K562 (cell line): ENCODE measurements at regions of chr2 and their contacts with region 1.

Region 1: GRCh38 chr2:230987137-230988020 is 8.5 kb upstream of the SPATA3 start:
- DNase-seq: peak; percentile 71 to 84 (median 80)
- ATAC-seq: peak; percentile 94
- H3K4me3 ChIP-seq: peak overlapping the region; percentile 31
- H3K27ac ChIP-seq: no peak overlapping the region
- H3K4me1 ChIP-seq: peaks cover 2 to 19% of the 10 kb centered on the region in 2 experiments; a peak in 2 of 5 replicates
- H3K27me3 ChIP-seq: peaks cover 10 to 36% of the 10 kb centered on the region in 2 experiments; a peak in 4 of 5 replicates
- CTCF ChIP-seq: peak; percentile 76 to 88 (median 83)
- EP300 ChIP-seq: no peak
- POLR2A ChIP-seq: no peak
- RAD21 ChIP-seq: peak; percentile 85 to 89

Region 2: GRCh38 chr2:230824406-230824978 is 162.9 kb before region 1 on chr2:
- CTCF ChIA-PET with region 1: interaction called, 4 read pairs
- POLR2A ChIA-PET with region 1: interaction called, 3 read pairs
- in situ Hi-C with region 1: loop called (anchors 10 kb)
- intact Hi-C with region 1: loop called (anchors 1 kb)
- DNase-seq: peak; percentile 58 to 81 (median 61)
- ATAC-seq: peak; percentile 86
- H3K4me3 ChIP-seq: no peak overlapping the region
- H3K27ac ChIP-seq: no peak overlapping the region
- H3K4me1 ChIP-seq: peaks cover 0 to 16% of the 10 kb centered on the region in 2 experiments; a peak in 2 of 5 replicates
- H3K27me3 ChIP-seq: peaks cover 0 to 11% of the 10 kb centered on the region in 2 experiments; a peak in 2 of 5 replicates
- CTCF ChIP-seq: peak; percentile 65 to 71 (median 65)
- EP300 ChIP-seq: no peak
- POLR2A ChIP-seq: no peak
- RAD21 ChIP-seq: peak; percentile 58 to 71

Region 3: GRCh38 chr2:230847883-230848388 is 139.4 kb before region 1 on chr2:
- CTCF ChIA-PET with region 1: no interaction called
- POLR2A ChIA-PET with region 1: no interaction called
- in situ Hi-C with region 1: no loop called
- intact Hi-C with region 1: loop called (anchors 5 kb)
- DNase-seq: peak; percentile 77 to 87 (median 80)
- ATAC-seq: peak; percentile 99
- H3K4me3 ChIP-seq: no peak overlapping the region
- H3K27ac ChIP-seq: no peak overlapping the region
- H3K4me1 ChIP-seq: peaks cover 0 to 14% of the 10 kb centered on the region in 2 experiments; a peak in 2 of 5 replicates
- H3K27me3 ChIP-seq: peaks cover 0 to 6% of the 10 kb centered on the region in 2 experiments; a peak in 2 of 5 replicates
- CTCF ChIP-seq: peak; percentile 70 to 78 (median 78)
- EP300 ChIP-seq: no peak
- POLR2A ChIP-seq: no peak
- RAD21 ChIP-seq: peak; percentile 21 to 61; a peak in 3 of 4 replicates

Region 4: GRCh38 chr2:230902180-230902899 is 85.0 kb before region 1 on chr2:
- CTCF ChIA-PET with region 1: interaction called, 19 read pairs
- POLR2A ChIA-PET with region 1: no interaction called
- in situ Hi-C with region 1: loop called (anchors 5 kb)
- intact Hi-C with region 1: loop called (anchors 1 kb)
- DNase-seq: peak; percentile 60 to 78 (median 60)
- ATAC-seq: peak; percentile 85
- H3K4me3 ChIP-seq: no peak overlapping the region
- H3K27ac ChIP-seq: no peak overlapping the region
- H3K4me1 ChIP-seq: peaks cover 18 to 20% of the 10 kb centered on the region in 2 experiments
- H3K27me3 ChIP-seq: peaks cover 0 to 10% of the 10 kb centered on the region in 2 experiments; a peak in 2 of 5 replicates
- CTCF ChIP-seq: peak; percentile 81 to 91 (median 85)
- EP300 ChIP-seq: no peak
- POLR2A ChIP-seq: no peak
- RAD21 ChIP-seq: peak; percentile 81 to 88

Region 5: GRCh38 chr2:230913406-230914143 is 73.8 kb before region 1 on chr2:
- CTCF ChIA-PET with region 1: no interaction called
- POLR2A ChIA-PET with region 1: no interaction called
- in situ Hi-C with region 1: loop called (anchors 5 kb)
- intact Hi-C with region 1: no loop called
- DNase-seq: peak; percentile 53 to 62 (median 58)
- ATAC-seq: peak; percentile 67; the same call in 2 of the 3 replicates
- H3K4me3 ChIP-seq: no peak overlapping the region
- H3K27ac ChIP-seq: no peak overlapping the region
- H3K4me1 ChIP-seq: peaks cover 6 to 24% of the 10 kb centered on the region in 2 experiments; a peak in 4 of 5 replicates
- H3K27me3 ChIP-seq: no peaks in the 10 kb centered on the region
- CTCF ChIP-seq: peak; percentile 64 to 71 (median 67); a peak in 5 of 6 replicates
- EP300 ChIP-seq: no peak
- POLR2A ChIP-seq: no peak
- RAD21 ChIP-seq: peak; percentile 59 to 74

Region 6: GRCh38 chr2:230924470-230925341 is 62.7 kb before region 1 on chr2 and contains the start of gene GPR55:
- CTCF ChIA-PET with region 1: no interaction called
- POLR2A ChIA-PET with region 1: interaction called, 3 read pairs
- in situ Hi-C with region 1: no loop called
- intact Hi-C with region 1: loop called (anchors 5 kb)
- DNase-seq: peak; percentile 26 to 53 (median 46)
- ATAC-seq: peak; percentile 69
- H3K4me3 ChIP-seq: no peak within 1 kb of the TSS
- H3K27ac ChIP-seq: no peak within 1 kb of the TSS
- H3K4me1 ChIP-seq: peaks cover 0 to 5% of the 10 kb centered on the region in 2 experiments; a peak in 2 of 5 replicates
- H3K27me3 ChIP-seq: peaks cover 0 to 44% of the 10 kb centered on the region in 2 experiments; a peak in 4 of 5 replicates
- CTCF ChIP-seq: peak; percentile 40 to 50 (median 42); a peak in 5 of 6 replicates
- EP300 ChIP-seq: no peak
- POLR2A ChIP-seq: no peak
- RAD21 ChIP-seq: peak in 1 of 2 experiments; percentile 39; a peak in 2 of 4 replicates
- polyA plus RNA-seq, gene GPR55: 0.27 to 0.34 TPM

Region 7: DNA sequence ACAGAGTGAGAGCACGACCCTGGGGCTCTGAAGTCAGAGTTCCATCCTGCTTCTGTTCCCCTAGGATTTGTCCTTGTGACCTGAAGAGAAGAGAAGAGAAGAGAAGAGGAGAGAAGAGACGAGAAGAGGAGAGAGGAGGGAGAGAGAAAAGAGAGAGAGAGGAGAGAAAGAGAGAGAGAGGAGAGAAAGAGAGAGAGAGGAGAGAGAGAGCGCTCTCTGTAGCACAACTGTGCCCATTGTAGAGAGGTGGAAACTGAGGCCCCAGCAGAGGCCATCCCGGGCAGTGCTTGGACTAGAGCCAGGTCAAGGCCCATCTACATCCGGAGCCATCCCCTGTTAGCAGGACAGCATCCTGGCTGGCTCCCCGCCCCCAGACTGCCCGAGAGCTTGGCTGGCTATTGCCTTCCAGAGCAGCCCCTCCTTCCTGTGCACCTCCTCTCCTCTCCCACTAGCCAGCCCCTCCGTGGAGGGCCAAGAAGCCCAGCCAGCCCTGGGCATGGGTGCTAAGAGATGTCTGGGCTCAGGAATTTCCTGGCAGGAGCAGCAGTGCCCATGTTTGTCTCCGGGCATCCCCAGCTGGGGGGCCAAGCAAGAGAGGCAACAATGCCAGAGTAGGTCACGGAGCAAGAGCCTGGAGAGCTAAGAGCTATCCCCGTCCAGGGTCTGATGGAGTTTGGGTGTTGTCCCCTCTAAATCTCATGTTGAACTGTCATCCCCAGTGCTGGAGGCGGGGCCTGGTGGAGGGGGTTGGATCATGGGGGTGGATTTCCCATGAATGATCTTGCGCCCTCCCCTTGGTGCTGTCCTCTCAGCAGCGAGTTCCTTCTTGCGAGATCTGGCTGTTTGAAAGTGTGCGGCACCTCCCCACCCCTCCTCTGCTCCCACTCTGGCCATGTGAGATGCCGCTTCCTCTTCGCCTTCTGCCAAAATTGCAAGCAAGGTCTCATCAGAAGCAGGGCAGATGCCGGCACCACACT is 44.2 kb before region 1 on chr2:
- CTCF ChIA-PET with region 1: interaction called, 5 read pairs
- POLR2A ChIA-PET with region 1: no interaction called
- in situ Hi-C with region 1: no loop called
- intact Hi-C with region 1: loop called (anchors 1 kb)
- DNase-seq: peak in 2 of 4 experiments; percentile 24 to 27
- ATAC-seq: peak; percentile 81
- H3K4me3 ChIP-seq: no peak overlapping the region
- H3K27ac ChIP-seq: no peak overlapping the region
- H3K4me1 ChIP-seq: no peaks in the 10 kb centered on the region; a peak in 2 of 5 replicates
- H3K27me3 ChIP-seq: peaks cover 2 to 31% of the 10 kb centered on the region in 2 experiments; a peak in 4 of 5 replicates
- CTCF ChIP-seq: no peak
- EP300 ChIP-seq: no peak
- POLR2A ChIP-seq: no peak
- RAD21 ChIP-seq: no peak